GM12878 (cell line): ENCODE measurements at regions of chr19 and their contacts with region 1.

Region 1: DNA sequence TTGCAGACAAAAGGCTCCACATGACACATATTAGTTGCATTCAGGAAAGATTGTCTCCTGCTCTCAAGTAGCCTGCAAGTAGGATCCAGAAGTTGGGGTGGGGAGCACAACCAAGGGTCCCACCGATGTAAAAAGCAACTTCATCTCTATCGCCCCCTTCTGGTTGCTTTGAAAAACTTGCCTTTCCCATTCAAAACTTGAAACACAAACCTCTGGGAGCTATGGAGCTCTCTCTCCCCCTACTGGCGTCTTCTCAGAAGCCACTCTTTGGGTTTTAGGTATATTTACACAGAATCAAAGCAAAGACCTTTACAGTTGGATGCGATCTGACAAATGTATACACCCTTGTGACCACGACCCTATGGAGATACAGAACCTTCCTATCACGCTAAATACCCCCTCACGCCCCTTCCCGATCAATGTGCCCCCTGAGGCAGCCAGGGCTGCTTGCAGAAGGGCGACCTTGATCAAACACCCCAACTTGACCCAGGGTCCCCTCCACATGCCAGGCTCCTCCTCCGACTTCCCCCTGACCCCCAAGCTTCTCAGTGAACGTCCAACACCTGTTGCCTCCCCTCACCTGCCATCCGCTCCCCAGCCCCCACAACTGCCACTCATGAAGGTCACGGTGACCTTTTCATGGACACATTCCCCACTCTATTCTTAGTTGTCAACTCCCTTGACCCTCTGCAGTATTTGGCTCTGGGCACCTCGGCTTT is 10.1 kb downstream of the NOSIP start:
- DNase-seq: no peak
- ATAC-seq: peak; percentile 96
- H3K4me3 ChIP-seq: no peak overlapping the region
- H3K27ac ChIP-seq: no peak overlapping the region
- H3K4me1 ChIP-seq: peaks cover 11% of the 10 kb centered on the region
- H3K27me3 ChIP-seq: no peaks in the 10 kb centered on the region
- CTCF ChIP-seq: peak; percentile 94 to 100 (median 99); a peak in 5 of 6 replicates
- EP300 ChIP-seq: no peak
- POLR2A ChIP-seq: no peak
- RAD21 ChIP-seq: peak; percentile 97

Region 2: GRCh38 chr19:49473868-49474544 is 96.3 kb before region 1 on chr19 and contains the start of gene FLT3LG:
- CTCF ChIA-PET with region 1: interaction called, 19 read pairs
- POLR2A ChIA-PET with region 1: no interaction called
- RAD21 ChIA-PET with region 1: no interaction called
- SMC1A ChIA-PET with region 1: interaction called, 6 read pairs
- in situ Hi-C with region 1: no loop called
- intact Hi-C with region 1: no loop called
- DNase-seq: no peak
- ATAC-seq: peak; percentile 66
- H3K4me3 ChIP-seq: peak within 1 kb of the TSS; percentile 82
- H3K27ac ChIP-seq: peak within 1 kb of the TSS; percentile 66
- H3K4me1 ChIP-seq: peaks cover 32% of the 10 kb centered on the region
- H3K27me3 ChIP-seq: no peaks in the 10 kb centered on the region
- CTCF ChIP-seq: peak; percentile 91 to 97 (median 94)
- EP300 ChIP-seq: no peak
- POLR2A ChIP-seq: peak; percentile 69; the same call in 1 of the 2 replicates
- RAD21 ChIP-seq: peak; percentile 63
- polyA plus RNA-seq, gene FLT3LG: 0.68 to 1.6 TPM

Region 3: GRCh38 chr19:49502866-49503581 is 67.3 kb before region 1 on chr19:
- CTCF ChIA-PET with region 1: interaction called, 46 read pairs
- POLR2A ChIA-PET with region 1: no interaction called
- RAD21 ChIA-PET with region 1: interaction called, 6 read pairs
- SMC1A ChIA-PET with region 1: interaction called, 8 read pairs
- in situ Hi-C with region 1: no loop called
- intact Hi-C with region 1: loop called (anchors 1 kb)
- DNase-seq: no peak
- ATAC-seq: peak; percentile 16; the same call in 1 of the 3 replicates
- H3K4me3 ChIP-seq: no peak overlapping the region
- H3K27ac ChIP-seq: no peak overlapping the region
- H3K4me1 ChIP-seq: peaks cover 30% of the 10 kb centered on the region
- H3K27me3 ChIP-seq: no peaks in the 10 kb centered on the region
- CTCF ChIP-seq: peak; percentile 44 to 56 (median 51)
- EP300 ChIP-seq: no peak
- POLR2A ChIP-seq: no peak
- RAD21 ChIP-seq: peak; percentile 55

Region 4: GRCh38 chr19:49546825-49547565 is 23.3 kb before region 1 on chr19:
- CTCF ChIA-PET with region 1: interaction called, 37 read pairs
- POLR2A ChIA-PET with region 1: no interaction called
- RAD21 ChIA-PET with region 1: interaction called, 3 read pairs
- SMC1A ChIA-PET with region 1: interaction called, 8 read pairs
- in situ Hi-C with region 1: no loop called
- intact Hi-C with region 1: no loop called
- DNase-seq: peak; percentile 42
- ATAC-seq: peak; percentile 85
- H3K4me3 ChIP-seq: no peak overlapping the region
- H3K27ac ChIP-seq: no peak overlapping the region
- H3K4me1 ChIP-seq: no peaks in the 10 kb centered on the region
- H3K27me3 ChIP-seq: no peaks in the 10 kb centered on the region
- CTCF ChIP-seq: peak; percentile 75 to 90 (median 86)
- EP300 ChIP-seq: no peak
- POLR2A ChIP-seq: no peak
- RAD21 ChIP-seq: peak; percentile 91

Region 5: GRCh38 chr19:49580264-49581006 is 10.1 kb after region 1 on chr19 and contains the start of gene NOSIP:
- CTCF ChIA-PET with region 1: interaction called, 48 read pairs
- POLR2A ChIA-PET with region 1: interaction called, 6 read pairs
- RAD21 ChIA-PET with region 1: interaction called, 14 read pairs
- SMC1A ChIA-PET with region 1: interaction called, 8 read pairs
- in situ Hi-C with region 1: no loop called
- intact Hi-C with region 1: no loop called
- DNase-seq: peak; percentile 89
- ATAC-seq: peak; percentile 98
- H3K4me3 ChIP-seq: peak within 1 kb of the TSS; percentile 77
- H3K27ac ChIP-seq: peak within 1 kb of the TSS; percentile 65
- H3K4me1 ChIP-seq: peaks cover 7% of the 10 kb centered on the region; the same call in 1 of the 2 replicates
- H3K27me3 ChIP-seq: no peaks in the 10 kb centered on the region
- CTCF ChIP-seq: no peak
- EP300 ChIP-seq: no peak
- POLR2A ChIP-seq: peak; percentile 100
- RAD21 ChIP-seq: no peak
- polyA plus RNA-seq, gene NOSIP: 7.2 to 20.1 TPM

Region 6: GRCh38 chr19:49590071-49590970 is 20.0 kb after region 1 on chr19:
- CTCF ChIA-PET with region 1: interaction called, 17 read pairs
- POLR2A ChIA-PET with region 1: no interaction called
- RAD21 ChIA-PET with region 1: interaction called, 4 read pairs
- SMC1A ChIA-PET with region 1: interaction called, 5 read pairs
- in situ Hi-C with region 1: no loop called
- intact Hi-C with region 1: no loop called
- DNase-seq: peak; percentile 91
- ATAC-seq: peak; percentile 88
- H3K4me3 ChIP-seq: peak overlapping the region; percentile 85
- H3K27ac ChIP-seq: peak overlapping the region; percentile 90
- H3K4me1 ChIP-seq: peaks cover 15% of the 10 kb centered on the region
- H3K27me3 ChIP-seq: no peaks in the 10 kb centered on the region
- CTCF ChIP-seq: 0 out of 6 replicates have a peak, but pooled peaks of 1 of the 3 experiments have one; percentile 2
- EP300 ChIP-seq: no peak
- POLR2A ChIP-seq: peak; percentile 89
- RAD21 ChIP-seq: no peak

Region 7: GRCh38 chr19:49640113-49640898 is 70.0 kb after region 1 on chr19 and contains the start of gene RRAS:
- CTCF ChIA-PET with region 1: interaction called, 16 read pairs
- POLR2A ChIA-PET with region 1: interaction called, 8 read pairs
- RAD21 ChIA-PET with region 1: interaction called, 3 read pairs
- SMC1A ChIA-PET with region 1: interaction called, 4 read pairs
- in situ Hi-C with region 1: no loop called
- intact Hi-C with region 1: no loop called
- DNase-seq: peak; percentile 100
- ATAC-seq: peak; percentile 79
- H3K4me3 ChIP-seq: peak within 1 kb of the TSS; percentile 80
- H3K27ac ChIP-seq: peak within 1 kb of the TSS; percentile 98
- H3K4me1 ChIP-seq: peaks cover 18% of the 10 kb centered on the region
- H3K27me3 ChIP-seq: no peaks in the 10 kb centered on the region
- CTCF ChIP-seq: no peak
- EP300 ChIP-seq: no peak
- POLR2A ChIP-seq: peak; percentile 94
- RAD21 ChIP-seq: no peak
- polyA plus RNA-seq, gene RRAS: 0.24 to 0.29 TPM